ENCODE measurements at regions of chr19 and their contacts with region 1.

Region 1: GRCh38 chr19:38899447-38900219 is at the starts of genes NFKBIB and SIRT2:
- DNase-seq: peak; percentile 97 to 100 (median 99)
- ATAC-seq: peak; percentile 86
- H3K4me3 ChIP-seq: peak within 1 kb of the TSS; percentile 97
- H3K4me3 Mint-ChIP-seq: peak within 1 kb of the TSS; percentile 93
- H3K27ac ChIP-seq: peak within 1 kb of the TSS; percentile 97 to 99
- H3K27ac Mint-ChIP-seq: peak within 1 kb of the TSS; percentile 89
- H3K4me1 ChIP-seq: peaks cover 49% of the 10 kb centered on the region
- H3K4me1 Mint-ChIP-seq: peaks cover 47% of the 10 kb centered on the region
- H3K27me3 ChIP-seq: no peaks in the 10 kb centered on the region
- H3K27me3 Mint-ChIP-seq: no peaks in the 10 kb centered on the region
- CTCF ChIP-seq: no peak
- total RNA-seq, gene NFKBIB: 29.3 to 30.1 TPM
- total RNA-seq, gene SIRT2: 60.8 to 67.8 TPM

Region 2: DNA sequence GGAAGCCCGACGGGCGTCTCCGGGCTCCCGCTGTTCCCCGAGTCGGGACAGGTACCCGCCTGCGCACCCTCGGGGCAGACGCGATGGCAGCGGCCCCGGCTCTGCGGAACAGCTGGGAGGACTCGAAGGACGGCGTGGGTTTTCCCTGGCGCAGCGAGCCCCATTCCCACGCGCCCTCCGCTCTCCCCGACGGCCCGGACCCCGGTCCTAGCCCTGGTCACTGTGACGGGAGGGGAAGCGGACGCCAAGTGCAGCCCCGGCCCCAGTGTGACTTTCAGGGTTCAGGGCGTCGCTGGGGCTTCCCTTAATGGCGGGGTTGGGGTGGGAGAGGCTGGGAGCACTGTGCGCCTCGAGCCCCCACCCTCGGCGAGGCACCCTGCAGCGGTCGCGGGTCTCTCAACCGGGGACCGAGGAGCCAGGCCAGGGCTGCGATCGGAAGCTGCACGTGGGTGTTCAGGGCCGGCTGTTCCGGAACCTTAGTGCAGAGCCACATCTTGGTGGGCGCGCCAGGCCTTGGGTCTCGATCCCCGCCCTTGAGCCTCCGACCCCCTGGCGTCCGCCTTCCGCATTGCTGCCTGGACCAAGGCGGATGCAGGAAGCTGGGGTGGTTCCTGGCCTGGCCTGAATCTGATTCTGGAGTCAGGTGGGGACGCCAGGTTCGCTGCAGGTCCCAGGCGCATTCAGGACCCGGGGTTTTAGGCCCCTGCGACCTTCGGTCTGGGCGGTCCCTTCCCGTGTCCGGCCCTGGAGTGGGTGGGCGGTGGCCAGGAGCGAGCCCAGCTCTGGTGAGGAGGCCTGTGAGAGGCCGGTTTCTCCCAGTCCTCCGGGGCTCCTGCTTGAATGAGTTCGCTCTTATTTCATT is 107.2 kb before region 1 on chr19:
- CTCF ChIA-PET with region 1: no interaction called
- POLR2A ChIA-PET with region 1: no interaction called
- intact Hi-C with region 1: no loop called
- DNase-seq: peak in 10 of 14 experiments; percentile 10 to 59 (median 36)
- ATAC-seq: peak; percentile 33
- H3K4me3 ChIP-seq: peak overlapping the region; percentile 50
- H3K4me3 Mint-ChIP-seq: peak overlapping the region; percentile 78
- H3K27ac ChIP-seq: no peak overlapping the region
- H3K27ac Mint-ChIP-seq: no peak overlapping the region
- H3K4me1 ChIP-seq: peaks cover 8% of the 10 kb centered on the region
- H3K4me1 Mint-ChIP-seq: peaks cover 5% of the 10 kb centered on the region
- H3K27me3 ChIP-seq: no peaks in the 10 kb centered on the region
- H3K27me3 Mint-ChIP-seq: no peaks in the 10 kb centered on the region
- CTCF ChIP-seq: no peak

Region 3: DNA sequence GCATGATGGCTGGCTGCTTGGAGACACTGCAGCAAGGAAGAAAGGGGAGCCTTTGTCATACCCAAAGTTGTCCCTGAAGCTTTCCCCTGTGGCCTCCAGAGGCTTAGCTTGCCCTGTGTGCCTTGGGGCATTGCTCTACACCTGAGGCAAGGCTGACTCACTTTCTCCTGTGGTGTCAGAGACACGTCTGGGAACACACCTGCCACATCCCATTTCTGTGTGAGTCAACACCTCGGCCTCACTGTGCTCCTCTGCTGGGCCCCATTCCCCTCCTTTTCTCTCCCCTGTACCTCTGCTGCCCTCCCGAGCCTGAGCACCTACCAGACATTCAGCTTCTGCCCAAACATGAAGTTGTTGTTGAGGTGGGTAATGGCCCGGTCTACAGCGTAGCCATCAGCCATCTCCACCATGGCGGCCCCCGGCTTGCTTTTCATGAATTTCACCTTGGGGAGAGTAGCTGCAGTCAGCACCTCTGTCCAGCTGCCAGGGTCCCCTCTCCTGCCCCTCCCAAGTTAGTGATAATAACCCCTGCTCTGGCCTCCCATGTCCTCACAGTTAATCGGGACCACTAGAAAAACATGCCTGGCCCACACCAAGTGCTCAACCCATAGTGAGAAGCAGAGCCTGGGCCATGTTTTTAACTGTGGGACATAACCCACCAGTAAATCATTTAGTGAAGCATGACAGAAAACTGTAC is 60.9 kb before region 1 on chr19:
- CTCF ChIA-PET with region 1: no interaction called
- POLR2A ChIA-PET with region 1: interaction called, 6 read pairs
- intact Hi-C with region 1: loop called in 1 of 2 experiments (anchors 2 kb)
- DNase-seq: peak in 5 of 14 experiments; percentile 29 to 60 (median 33)
- ATAC-seq: no peak
- H3K4me3 ChIP-seq: no peak overlapping the region
- H3K4me3 Mint-ChIP-seq: no peak overlapping the region
- H3K27ac ChIP-seq: no peak overlapping the region
- H3K27ac Mint-ChIP-seq: peak overlapping the region; percentile 55
- H3K4me1 ChIP-seq: peaks cover 42% of the 10 kb centered on the region
- H3K4me1 Mint-ChIP-seq: peaks cover 39% of the 10 kb centered on the region
- H3K27me3 ChIP-seq: no peaks in the 10 kb centered on the region
- H3K27me3 Mint-ChIP-seq: peaks cover 5% of the 10 kb centered on the region
- CTCF ChIP-seq: no peak

Region 4: GRCh38 chr19:38849860-38850435 is 49.7 kb before region 1 on chr19 and contains the start of gene HNRNPL:
- CTCF ChIA-PET with region 1: no interaction called
- POLR2A ChIA-PET with region 1: interaction called, 13 read pairs
- intact Hi-C with region 1: loop called in 1 of 2 experiments (anchors 1 kb)
- DNase-seq: peak; percentile 98 to 100 (median 99)
- ATAC-seq: peak; percentile 69
- H3K4me3 ChIP-seq: peak within 1 kb of the TSS; percentile 76
- H3K4me3 Mint-ChIP-seq: peak within 1 kb of the TSS; percentile 98
- H3K27ac ChIP-seq: peak within 1 kb of the TSS; percentile 95 to 97
- H3K27ac Mint-ChIP-seq: peak within 1 kb of the TSS; percentile 97
- H3K4me1 ChIP-seq: peaks cover 66% of the 10 kb centered on the region
- H3K4me1 Mint-ChIP-seq: peaks cover 63% of the 10 kb centered on the region
- H3K27me3 ChIP-seq: no peaks in the 10 kb centered on the region
- H3K27me3 Mint-ChIP-seq: no peaks in the 10 kb centered on the region
- CTCF ChIP-seq: peak; percentile 16
- total RNA-seq, gene HNRNPL: 535 to 565 TPM